ENCODE measurements at regions of chr1 and their contacts with region 1.

Region 1: DNA sequence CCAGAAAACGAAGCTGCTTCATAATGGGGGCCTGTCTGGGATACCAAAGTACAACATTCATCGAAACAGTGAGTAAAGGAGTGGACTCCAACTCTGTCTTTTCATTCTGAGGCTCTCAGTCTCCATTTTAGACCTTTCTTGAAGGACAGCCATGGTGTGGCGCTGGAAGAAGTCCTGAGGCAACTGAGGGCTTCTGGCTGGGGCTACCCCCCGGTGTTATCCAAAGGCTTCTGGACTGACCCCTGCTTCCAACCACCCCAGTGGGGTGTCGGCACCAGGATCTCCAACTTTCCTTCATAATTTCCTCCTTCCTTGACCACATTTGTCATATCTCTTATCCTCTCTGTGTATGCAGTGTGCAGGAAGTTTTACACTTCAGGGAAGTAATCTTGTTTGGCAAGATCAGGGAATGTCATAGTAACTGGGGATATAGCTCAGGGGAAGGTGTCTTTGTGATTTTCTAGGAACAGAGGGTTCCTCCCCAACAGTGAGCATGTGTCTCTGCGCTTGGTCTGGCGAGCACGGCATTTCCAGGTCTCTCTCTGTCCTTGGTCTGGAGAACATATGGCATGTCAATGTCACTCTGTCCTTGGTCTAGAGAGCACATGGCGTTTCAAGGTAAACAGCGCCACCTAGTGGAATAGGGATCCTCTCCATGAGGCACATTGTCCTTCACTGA is 19.4 kb upstream of the BSDC1 start:
- DNase-seq: peak; percentile 62
- H3K4me3 Mint-ChIP-seq: no peak overlapping the region
- H3K27ac Mint-ChIP-seq: no peak overlapping the region
- H3K4me1 Mint-ChIP-seq: peaks cover 4% of the 10 kb centered on the region
- H3K27me3 Mint-ChIP-seq: peaks cover 18% of the 10 kb centered on the region

Region 2: GRCh38 chr1:32215629-32216480 is 197.8 kb before region 1 on chr1:
- intact Hi-C with region 1: loop called (anchors 1 kb)
- DNase-seq: peak; percentile 35
- H3K4me3 Mint-ChIP-seq: no peak overlapping the region
- H3K27ac Mint-ChIP-seq: no peak overlapping the region
- H3K4me1 Mint-ChIP-seq: peaks cover 17% of the 10 kb centered on the region
- H3K27me3 Mint-ChIP-seq: no peaks in the 10 kb centered on the region

Region 3: GRCh38 chr1:32372149-32372756 is 41.4 kb before region 1 on chr1:
- intact Hi-C with region 1: no loop called
- DNase-seq: peak; percentile 66
- H3K4me3 Mint-ChIP-seq: no peak overlapping the region
- H3K27ac Mint-ChIP-seq: no peak overlapping the region
- H3K4me1 Mint-ChIP-seq: peaks cover 21% of the 10 kb centered on the region
- H3K27me3 Mint-ChIP-seq: no peaks in the 10 kb centered on the region

Region 4: GRCh38 chr1:32400876-32401631 is 12.6 kb before region 1 on chr1:
- intact Hi-C with region 1: loop called (anchors 1 kb)
- DNase-seq: peak; percentile 10
- H3K4me3 Mint-ChIP-seq: no peak overlapping the region
- H3K27ac Mint-ChIP-seq: no peak overlapping the region
- H3K4me1 Mint-ChIP-seq: no peaks in the 10 kb centered on the region
- H3K27me3 Mint-ChIP-seq: peaks cover 20% of the 10 kb centered on the region